Activated CD4-positive, alpha-beta memory T cell treated with anti-CD3 and anti-CD28 coated beads for 36 hours (primary cell): ENCODE measurements at regions of chr9 and their contacts with region 1.

Region 1: DNA sequence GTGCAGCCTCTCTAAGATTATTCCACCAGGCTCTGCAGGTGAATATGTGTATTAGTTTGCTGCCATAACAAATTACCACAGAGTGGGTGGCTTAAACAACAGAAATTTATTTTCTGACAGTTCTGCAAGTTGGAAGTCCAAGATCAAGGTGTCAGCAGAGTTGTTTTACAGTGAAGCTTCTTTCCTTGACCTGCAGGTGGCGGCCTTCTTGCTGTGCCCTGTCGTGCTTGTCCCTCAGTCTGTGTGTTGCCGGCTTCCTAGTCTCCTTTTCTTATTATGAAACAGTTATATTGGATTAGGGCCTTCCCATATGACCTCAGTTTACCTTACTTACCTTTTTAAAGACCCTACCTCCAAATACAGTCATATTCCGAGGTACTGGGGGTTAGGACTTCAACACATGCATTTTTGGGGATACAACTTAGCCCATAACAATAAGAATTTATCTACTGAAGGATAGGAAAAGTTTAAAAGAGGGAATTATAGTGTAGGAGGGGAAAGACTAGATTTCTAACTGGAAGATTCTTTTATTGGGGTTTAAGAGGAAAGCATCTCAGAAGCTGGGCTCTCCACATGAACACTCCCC is 97.4 kb downstream of the OSTF1 start:
- DNase-seq: peak; percentile 69
- H3K4me3 Mint-ChIP-seq: no peak overlapping the region
- H3K27ac Mint-ChIP-seq: no peak overlapping the region
- H3K4me1 Mint-ChIP-seq: peaks cover 19% of the 10 kb centered on the region
- H3K27me3 Mint-ChIP-seq: no peaks in the 10 kb centered on the region

Region 2: DNA sequence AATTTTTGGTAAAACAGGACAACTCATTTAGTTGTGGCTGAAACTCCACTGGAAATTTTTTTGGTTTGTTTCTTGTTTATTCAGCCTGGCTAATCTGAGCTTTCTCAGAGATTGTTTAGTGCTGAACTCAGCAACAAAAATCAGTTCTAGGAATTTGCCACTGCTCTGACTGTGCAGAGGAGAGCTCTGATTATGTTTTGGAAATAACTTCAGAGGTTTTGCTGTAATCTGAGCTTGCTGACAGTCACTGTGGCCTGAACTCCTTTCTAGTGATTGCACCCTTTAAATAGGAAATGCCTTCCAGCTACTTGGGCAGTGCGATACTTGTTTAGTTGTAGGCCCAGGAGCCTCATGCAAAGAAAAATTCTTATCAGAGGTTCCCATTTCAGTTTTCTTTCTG is 37.1 kb before region 1 on chr9:
- CTCF ChIA-PET with region 1: interaction called, 12 read pairs
- POLR2A ChIA-PET with region 1: no interaction called
- intact Hi-C with region 1: loop called (anchors 2 kb)
- DNase-seq: peak; percentile 41
- H3K4me3 Mint-ChIP-seq: no peak overlapping the region
- H3K27ac Mint-ChIP-seq: peak overlapping the region; percentile 82
- H3K4me1 Mint-ChIP-seq: peaks cover 69% of the 10 kb centered on the region
- H3K27me3 Mint-ChIP-seq: no peaks in the 10 kb centered on the region

Region 3: GRCh38 chr9:75163764-75164163 is 21.9 kb before region 1 on chr9:
- CTCF ChIA-PET with region 1: interaction called, 18 read pairs
- POLR2A ChIA-PET with region 1: no interaction called
- intact Hi-C with region 1: no loop called
- DNase-seq: no peak
- H3K4me3 Mint-ChIP-seq: no peak overlapping the region
- H3K27ac Mint-ChIP-seq: no peak overlapping the region
- H3K4me1 Mint-ChIP-seq: peaks cover 18% of the 10 kb centered on the region
- H3K27me3 Mint-ChIP-seq: no peaks in the 10 kb centered on the region

Region 4: GRCh38 chr9:75175395-75175794 is 10.3 kb before region 1 on chr9:
- CTCF ChIA-PET with region 1: interaction called, 16 read pairs
- POLR2A ChIA-PET with region 1: no interaction called
- intact Hi-C with region 1: no loop called
- DNase-seq: no peak
- H3K4me3 Mint-ChIP-seq: no peak overlapping the region
- H3K27ac Mint-ChIP-seq: no peak overlapping the region
- H3K4me1 Mint-ChIP-seq: peaks cover 8% of the 10 kb centered on the region
- H3K27me3 Mint-ChIP-seq: no peaks in the 10 kb centered on the region

Region 5: GRCh38 chr9:75200892-75201470 is 15.3 kb after region 1 on chr9:
- CTCF ChIA-PET with region 1: interaction called, 14 read pairs
- POLR2A ChIA-PET with region 1: no interaction called
- intact Hi-C with region 1: no loop called
- DNase-seq: no peak
- H3K4me3 Mint-ChIP-seq: no peak overlapping the region
- H3K27ac Mint-ChIP-seq: no peak overlapping the region
- H3K4me1 Mint-ChIP-seq: no peaks in the 10 kb centered on the region
- H3K27me3 Mint-ChIP-seq: no peaks in the 10 kb centered on the region

Region 6: GRCh38 chr9:75238311-75238978 is 52.8 kb after region 1 on chr9:
- CTCF ChIA-PET with region 1: interaction called, 15 read pairs
- POLR2A ChIA-PET with region 1: no interaction called
- intact Hi-C with region 1: loop called (anchors 5 kb)
- DNase-seq: peak; percentile 51
- H3K4me3 Mint-ChIP-seq: no peak overlapping the region
- H3K27ac Mint-ChIP-seq: no peak overlapping the region
- H3K4me1 Mint-ChIP-seq: peaks cover 3% of the 10 kb centered on the region
- H3K27me3 Mint-ChIP-seq: no peaks in the 10 kb centered on the region